CD8-positive, alpha-beta T cell (primary cell): ENCODE measurements at regions of chr1 and their contacts with region 1.

Region 1: DNA sequence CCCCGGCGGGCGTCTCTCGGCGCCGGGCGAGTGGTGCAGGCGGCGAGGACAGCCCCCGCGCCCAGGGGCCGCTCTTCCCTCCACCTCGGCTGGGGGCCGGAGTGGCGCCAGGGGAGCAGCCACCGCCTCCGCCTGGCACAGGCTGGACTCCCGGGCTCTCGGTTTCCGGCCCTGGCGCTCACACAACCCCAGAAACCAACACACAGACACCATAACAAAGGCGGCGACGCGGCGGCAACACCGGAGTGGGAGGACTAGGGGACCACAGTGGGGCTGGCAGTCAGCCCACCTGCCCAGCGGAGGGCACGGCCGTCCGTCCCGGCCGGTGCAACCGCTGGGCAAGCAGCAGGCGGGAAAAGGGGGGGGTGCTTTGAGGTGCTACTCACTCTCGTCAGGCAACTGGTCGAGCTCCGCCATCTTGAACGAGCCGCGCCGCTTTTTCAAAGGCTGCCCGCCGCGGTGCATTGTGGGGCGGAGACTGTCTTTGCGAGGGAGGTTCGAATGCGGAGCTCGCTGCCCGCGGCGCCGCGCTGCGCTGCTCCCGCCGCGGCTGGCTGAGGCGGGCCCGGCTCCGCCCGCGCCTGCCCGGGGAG is at the start of gene LIN9:
- DNase-seq: peak; percentile 82 to 94 (median 91)
- ATAC-seq: peak; percentile 90
- H3K4me3 ChIP-seq: peak within 1 kb of the TSS; percentile 91 to 99
- H3K4me3 Mint-ChIP-seq: peak within 1 kb of the TSS; percentile 95
- H3K27ac ChIP-seq: peak within 1 kb of the TSS; percentile 49 to 56
- H3K27ac Mint-ChIP-seq: peak within 1 kb of the TSS; percentile 86
- H3K4me1 ChIP-seq: peaks cover 14% of the 10 kb centered on the region
- H3K4me1 Mint-ChIP-seq: peaks cover 22% of the 10 kb centered on the region
- H3K27me3 ChIP-seq: peaks cover 0 to 8% of the 10 kb centered on the region in 2 experiments
- H3K27me3 Mint-ChIP-seq: peaks cover 8% of the 10 kb centered on the region
- CTCF ChIP-seq: no peak
- total RNA-seq, gene LIN9: 1.1 to 1.3 TPM

Region 2: GRCh38 chr1:225428068-225428880 is 880.5 kb before region 1 on chr1:
- CTCF ChIA-PET with region 1: no interaction called
- POLR2A ChIA-PET with region 1: no interaction called
- intact Hi-C with region 1: loop called (anchors 5 to 10 kb)
- DNase-seq: peak; percentile 80 to 96 (median 91)
- ATAC-seq: peak; percentile 92
- H3K4me3 ChIP-seq: peak overlapping the region; percentile 80 to 89
- H3K4me3 Mint-ChIP-seq: peak overlapping the region; percentile 93
- H3K27ac ChIP-seq: peak overlapping the region; percentile 69 to 70
- H3K27ac Mint-ChIP-seq: peak overlapping the region; percentile 91
- H3K4me1 ChIP-seq: peaks cover 39% of the 10 kb centered on the region
- H3K4me1 Mint-ChIP-seq: peaks cover 44% of the 10 kb centered on the region
- H3K27me3 ChIP-seq: no peaks in the 10 kb centered on the region
- H3K27me3 Mint-ChIP-seq: no peaks in the 10 kb centered on the region
- CTCF ChIP-seq: no peak

Region 3: DNA sequence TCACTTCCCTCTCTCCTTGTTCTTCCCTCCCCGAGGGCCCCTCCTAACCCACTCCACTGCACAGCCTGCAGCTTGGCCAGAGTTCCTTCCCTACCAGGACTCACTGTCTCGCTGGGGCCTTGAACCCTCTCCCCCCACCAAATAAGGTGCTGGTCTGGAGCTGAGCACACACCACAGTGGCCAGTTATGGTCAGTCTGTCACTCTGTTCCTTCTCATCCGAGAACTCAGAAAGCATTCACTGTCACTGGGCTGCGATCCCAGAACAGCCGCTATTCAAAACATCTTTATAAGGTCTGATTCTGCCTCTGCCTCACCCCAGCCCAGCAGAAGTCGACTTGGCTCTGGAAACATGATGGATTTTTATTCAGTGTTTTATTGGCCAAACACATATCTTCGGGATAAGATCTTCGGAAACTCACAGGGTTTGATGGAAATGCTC is 861.1 kb before region 1 on chr1:
- CTCF ChIA-PET with region 1: no interaction called
- POLR2A ChIA-PET with region 1: no interaction called
- intact Hi-C with region 1: loop called in 1 of 2 experiments (anchors 5 kb)
- DNase-seq: peak in 1 of 9 experiments; percentile 25
- ATAC-seq: no peak
- H3K4me3 ChIP-seq: no peak overlapping the region
- H3K4me3 Mint-ChIP-seq: no peak overlapping the region
- H3K27ac ChIP-seq: no peak overlapping the region
- H3K27ac Mint-ChIP-seq: peak overlapping the region; percentile 14
- H3K4me1 ChIP-seq: peaks cover 35% of the 10 kb centered on the region
- H3K4me1 Mint-ChIP-seq: peaks cover 51% of the 10 kb centered on the region
- H3K27me3 ChIP-seq: no peaks in the 10 kb centered on the region
- H3K27me3 Mint-ChIP-seq: no peaks in the 10 kb centered on the region
- CTCF ChIP-seq: no peak

Region 4: GRCh38 chr1:226109829-226110248 is 199.0 kb before region 1 on chr1:
- CTCF ChIA-PET with region 1: no interaction called
- POLR2A ChIA-PET with region 1: no interaction called
- intact Hi-C with region 1: loop called in 1 of 2 experiments (anchors 2 kb)
- DNase-seq: peak; percentile 49 to 89 (median 76)
- ATAC-seq: peak; percentile 85
- H3K4me3 ChIP-seq: peak overlapping the region; percentile 54 to 63
- H3K4me3 Mint-ChIP-seq: peak overlapping the region; percentile 94
- H3K27ac ChIP-seq: peak overlapping the region; percentile 52 to 74
- H3K27ac Mint-ChIP-seq: peak overlapping the region; percentile 88
- H3K4me1 ChIP-seq: peaks cover 11% of the 10 kb centered on the region
- H3K4me1 Mint-ChIP-seq: peaks cover 18% of the 10 kb centered on the region
- H3K27me3 ChIP-seq: no peaks in the 10 kb centered on the region
- H3K27me3 Mint-ChIP-seq: no peaks in the 10 kb centered on the region
- CTCF ChIP-seq: no peak

Region 5: DNA sequence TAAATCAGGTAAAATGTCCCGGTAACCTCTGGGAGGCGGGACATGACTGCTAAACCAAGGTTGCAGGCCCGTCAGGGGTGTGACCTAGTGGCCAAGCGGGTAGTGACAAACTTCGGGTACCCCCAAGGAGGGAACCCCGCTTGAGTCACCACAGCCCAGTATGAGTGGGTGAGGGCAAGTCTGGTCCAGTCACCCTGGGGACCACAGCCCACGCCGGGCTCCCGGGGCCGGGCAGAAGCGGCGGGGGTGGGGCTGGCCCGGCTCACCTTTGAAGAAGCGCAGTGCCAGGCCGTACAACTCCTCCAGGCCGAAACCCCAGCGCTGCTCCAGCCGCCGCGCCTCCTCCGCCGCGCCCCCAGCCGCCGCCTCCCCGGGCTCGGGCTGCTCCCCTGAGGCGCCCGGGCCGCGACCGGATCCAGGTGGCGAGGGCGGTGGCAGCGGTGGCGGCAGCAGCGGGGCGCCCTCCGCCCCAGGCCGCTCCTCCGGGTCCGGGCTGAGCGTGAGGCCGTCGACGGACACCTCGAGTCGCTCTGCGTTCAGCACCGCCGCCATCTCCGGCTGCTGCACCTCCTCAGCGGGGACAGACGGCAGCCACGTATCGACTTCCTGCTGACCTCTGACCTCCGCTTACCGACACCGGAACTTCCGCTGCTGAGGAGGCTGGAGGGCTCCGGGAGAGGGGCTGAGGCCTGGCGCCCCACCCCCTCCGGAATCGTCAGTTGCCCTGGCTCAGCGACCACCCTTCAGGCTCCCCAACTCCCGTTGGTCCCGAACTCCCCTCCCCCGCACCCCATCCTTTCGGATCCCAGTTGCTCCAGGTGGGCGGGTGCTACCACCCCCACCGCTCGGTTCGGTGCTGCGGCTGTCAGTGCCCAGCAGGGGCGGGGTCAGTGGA is 122.4 kb before region 1 on chr1 and contains the start of gene ACBD3:
- CTCF ChIA-PET with region 1: no interaction called
- POLR2A ChIA-PET with region 1: no interaction called
- intact Hi-C with region 1: loop called (anchors 2 kb)
- DNase-seq: peak; percentile 67 to 95 (median 87)
- ATAC-seq: peak; percentile 97
- H3K4me3 ChIP-seq: peak within 1 kb of the TSS; percentile 82 to 90
- H3K4me3 Mint-ChIP-seq: peak within 1 kb of the TSS; percentile 92
- H3K27ac ChIP-seq: peak within 1 kb of the TSS; percentile 72 to 88
- H3K27ac Mint-ChIP-seq: peak within 1 kb of the TSS; percentile 95
- H3K4me1 ChIP-seq: peaks cover 41% of the 10 kb centered on the region
- H3K4me1 Mint-ChIP-seq: peaks cover 40% of the 10 kb centered on the region
- H3K27me3 ChIP-seq: no peaks in the 10 kb centered on the region
- H3K27me3 Mint-ChIP-seq: no peaks in the 10 kb centered on the region
- CTCF ChIP-seq: no peak
- total RNA-seq, gene ACBD3: 40.9 to 41.4 TPM

Region 6: DNA sequence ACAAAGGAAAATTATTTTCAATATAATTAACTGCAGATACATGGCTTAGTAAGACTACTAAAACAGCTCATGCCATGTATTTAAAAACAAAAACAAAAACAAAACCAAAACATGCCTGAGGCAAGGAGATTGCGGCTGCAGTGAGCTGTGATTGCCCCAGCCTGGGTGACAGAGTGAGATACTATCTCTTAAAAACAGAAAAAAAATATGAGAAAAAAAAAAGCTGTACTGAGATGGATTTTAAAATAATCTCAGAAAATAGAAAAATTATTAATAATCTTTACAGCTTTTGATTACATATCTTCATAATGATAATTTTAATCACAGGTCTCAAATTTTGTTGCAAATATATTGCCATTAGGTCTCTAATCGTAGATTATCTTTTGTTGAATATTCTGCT is 24.1 kb after region 1 on chr1:
- CTCF ChIA-PET with region 1: interaction called, 17 read pairs
- POLR2A ChIA-PET with region 1: interaction called, 4 read pairs
- intact Hi-C with region 1: loop called in 1 of 2 experiments (anchors 2 kb)
- DNase-seq: peak in 2 of 9 experiments; percentile 11 to 34
- ATAC-seq: no peak
- H3K4me3 ChIP-seq: no peak overlapping the region
- H3K4me3 Mint-ChIP-seq: peak overlapping the region; percentile 65
- H3K27ac ChIP-seq: no peak overlapping the region
- H3K27ac Mint-ChIP-seq: no peak overlapping the region
- H3K4me1 ChIP-seq: peaks cover 3% of the 10 kb centered on the region
- H3K4me1 Mint-ChIP-seq: peaks cover 6% of the 10 kb centered on the region
- H3K27me3 ChIP-seq: no peaks in the 10 kb centered on the region
- H3K27me3 Mint-ChIP-seq: peaks cover 2% of the 10 kb centered on the region
- CTCF ChIP-seq: no peak

Region 7: DNA sequence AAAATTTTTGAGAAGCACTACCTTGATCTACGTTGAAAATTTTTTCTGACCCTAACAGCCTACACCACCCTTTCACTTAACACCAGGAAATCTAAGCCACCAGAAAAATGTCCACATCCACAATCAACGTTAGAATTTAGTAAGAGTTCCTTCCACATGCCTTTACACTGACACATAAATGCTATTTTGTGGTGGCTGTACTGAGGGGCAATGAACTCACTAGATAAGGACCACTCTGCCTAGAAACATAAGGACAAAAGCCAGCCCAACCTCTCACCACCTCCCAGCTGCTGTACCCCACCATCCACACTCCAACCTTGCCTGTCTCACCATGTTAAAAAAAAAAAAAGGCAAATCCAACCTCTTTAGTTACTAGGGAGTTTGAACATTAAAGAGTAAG is 69.3 kb after region 1 on chr1:
- CTCF ChIA-PET with region 1: no interaction called
- POLR2A ChIA-PET with region 1: no interaction called
- intact Hi-C with region 1: no loop called
- DNase-seq: no peak
- ATAC-seq: no peak
- H3K4me3 ChIP-seq: no peak overlapping the region
- H3K4me3 Mint-ChIP-seq: no peak overlapping the region
- H3K27ac ChIP-seq: no peak overlapping the region
- H3K27ac Mint-ChIP-seq: no peak overlapping the region
- H3K4me1 ChIP-seq: no peaks in the 10 kb centered on the region
- H3K4me1 Mint-ChIP-seq: no peaks in the 10 kb centered on the region
- H3K27me3 ChIP-seq: no peaks in the 10 kb centered on the region
- H3K27me3 Mint-ChIP-seq: no peaks in the 10 kb centered on the region
- CTCF ChIP-seq: no peak

Region 8: GRCh38 chr1:227734856-227735538 is 1426.2 kb after region 1 on chr1 and contains the starts of genes JMJD4 and SNAP47:
- CTCF ChIA-PET with region 1: no interaction called
- POLR2A ChIA-PET with region 1: no interaction called
- intact Hi-C with region 1: loop called in 1 of 2 experiments (anchors 5 kb)
- DNase-seq: peak; percentile 82 to 97 (median 92)
- ATAC-seq: peak; percentile 89
- H3K4me3 ChIP-seq: peak within 1 kb of the TSS; percentile 71 to 95
- H3K4me3 Mint-ChIP-seq: peak within 1 kb of the TSS; percentile 89
- H3K27ac ChIP-seq: peak within 1 kb of the TSS; percentile 71 to 76
- H3K27ac Mint-ChIP-seq: peak within 1 kb of the TSS; percentile 88
- H3K4me1 ChIP-seq: peaks cover 19% of the 10 kb centered on the region
- H3K4me1 Mint-ChIP-seq: peaks cover 51% of the 10 kb centered on the region
- H3K27me3 ChIP-seq: no peaks in the 10 kb centered on the region
- H3K27me3 Mint-ChIP-seq: no peaks in the 10 kb centered on the region
- CTCF ChIP-seq: no peak
- total RNA-seq, gene JMJD4: 7.4 to 9.5 TPM
- total RNA-seq, gene SNAP47: 11.0 to 13.8 TPM